Calu3 (cell line): ENCODE measurements at regions of chr1 and their contacts with region 1.

Region 1: GRCh38 chr1:71986160-71986559 is 296.2 kb downstream of the NEGR1 start:
- DNase-seq: no peak
- H3K4me3 Mint-ChIP-seq: no peak overlapping the region
- H3K27ac Mint-ChIP-seq: no peak overlapping the region
- H3K4me1 Mint-ChIP-seq: no peaks in the 10 kb centered on the region
- H3K27me3 Mint-ChIP-seq: no peaks in the 10 kb centered on the region
- CTCF ChIP-seq: no peak

Region 2: DNA sequence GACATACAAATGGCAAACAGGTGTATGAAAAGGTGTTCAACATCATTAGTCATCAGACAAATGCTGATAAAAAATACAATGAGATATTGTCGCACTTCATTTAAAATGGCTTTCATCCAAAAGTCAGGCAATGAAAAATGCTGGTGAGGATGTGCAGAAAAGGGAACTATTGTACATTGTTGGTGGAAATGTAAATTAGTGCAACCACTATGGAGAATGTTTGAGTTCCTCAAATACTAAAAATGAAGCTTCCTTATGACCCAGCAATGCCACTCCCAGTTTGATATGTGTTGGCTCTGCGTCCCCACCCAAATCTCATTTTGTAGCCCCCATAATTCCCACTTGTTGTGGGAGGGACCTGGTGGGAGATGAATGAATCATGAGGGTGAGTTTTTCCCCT is 595.6 kb before region 1 on chr1:
- CTCF ChIA-PET with region 1: no interaction called
- intact Hi-C with region 1: no loop called
- DNase-seq: no peak
- H3K4me3 Mint-ChIP-seq: no peak overlapping the region
- H3K27ac Mint-ChIP-seq: no peak overlapping the region
- H3K4me1 Mint-ChIP-seq: no peaks in the 10 kb centered on the region
- H3K27me3 Mint-ChIP-seq: no peaks in the 10 kb centered on the region
- CTCF ChIP-seq: no peak

Region 3: DNA sequence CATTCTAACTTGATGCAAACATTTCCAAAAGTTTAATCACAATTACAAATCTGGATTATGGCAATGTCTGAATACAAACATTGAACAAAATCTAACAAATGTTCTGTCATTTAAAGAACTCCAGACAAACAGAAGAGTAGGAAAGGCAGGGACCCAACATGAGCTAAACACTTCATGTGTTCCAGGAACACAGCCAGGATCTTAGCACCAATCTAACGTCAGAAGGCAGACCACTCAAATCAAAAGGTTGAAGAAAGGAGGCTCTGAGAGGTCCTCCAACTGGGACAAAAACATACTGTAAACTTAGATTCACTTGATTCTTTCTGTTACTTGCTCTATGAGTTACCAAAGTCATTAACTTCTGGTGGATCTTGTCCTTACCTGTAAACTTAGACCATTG is 77.9 kb before region 1 on chr1:
- CTCF ChIA-PET with region 1: no interaction called
- intact Hi-C with region 1: no loop called
- DNase-seq: no peak
- H3K4me3 Mint-ChIP-seq: no peak overlapping the region
- H3K27ac Mint-ChIP-seq: no peak overlapping the region
- H3K4me1 Mint-ChIP-seq: no peaks in the 10 kb centered on the region
- H3K27me3 Mint-ChIP-seq: no peaks in the 10 kb centered on the region
- CTCF ChIP-seq: no peak

Region 4: DNA sequence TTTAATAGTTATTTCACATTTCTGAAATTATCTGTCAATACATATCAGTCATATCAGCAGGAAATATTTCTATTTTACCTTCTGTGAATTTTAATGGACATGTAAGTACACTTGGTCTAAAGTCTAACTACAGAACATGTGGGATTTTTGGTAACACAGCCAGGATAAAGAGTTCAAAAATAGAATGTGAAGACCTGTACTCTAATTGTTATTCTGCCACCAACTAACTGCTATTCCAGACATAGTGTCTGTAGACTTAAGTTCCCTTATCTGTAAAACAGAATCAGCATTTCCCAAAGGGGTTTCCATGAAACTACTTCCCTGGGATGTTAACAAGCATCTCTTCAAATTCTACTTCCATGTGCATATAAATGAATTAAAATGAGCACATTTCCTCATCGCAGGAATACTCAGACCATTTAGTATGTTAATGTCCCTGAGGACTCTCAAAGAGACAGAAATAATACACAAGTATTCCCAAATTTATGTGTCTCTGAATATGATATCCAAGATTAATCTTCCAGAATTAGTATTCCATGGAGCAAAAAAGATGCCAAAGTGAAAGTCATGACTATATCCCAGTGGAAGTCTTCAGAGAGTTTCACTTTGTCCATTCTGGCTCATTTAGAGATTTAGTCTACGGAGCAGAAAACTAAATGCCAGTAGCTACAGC is 29.4 kb before region 1 on chr1:
- CTCF ChIA-PET with region 1: interaction called, 10 read pairs
- intact Hi-C with region 1: no loop called
- DNase-seq: no peak
- H3K4me3 Mint-ChIP-seq: no peak overlapping the region
- H3K27ac Mint-ChIP-seq: no peak overlapping the region
- H3K4me1 Mint-ChIP-seq: no peaks in the 10 kb centered on the region
- H3K27me3 Mint-ChIP-seq: no peaks in the 10 kb centered on the region
- CTCF ChIP-seq: no peak

Region 5: DNA sequence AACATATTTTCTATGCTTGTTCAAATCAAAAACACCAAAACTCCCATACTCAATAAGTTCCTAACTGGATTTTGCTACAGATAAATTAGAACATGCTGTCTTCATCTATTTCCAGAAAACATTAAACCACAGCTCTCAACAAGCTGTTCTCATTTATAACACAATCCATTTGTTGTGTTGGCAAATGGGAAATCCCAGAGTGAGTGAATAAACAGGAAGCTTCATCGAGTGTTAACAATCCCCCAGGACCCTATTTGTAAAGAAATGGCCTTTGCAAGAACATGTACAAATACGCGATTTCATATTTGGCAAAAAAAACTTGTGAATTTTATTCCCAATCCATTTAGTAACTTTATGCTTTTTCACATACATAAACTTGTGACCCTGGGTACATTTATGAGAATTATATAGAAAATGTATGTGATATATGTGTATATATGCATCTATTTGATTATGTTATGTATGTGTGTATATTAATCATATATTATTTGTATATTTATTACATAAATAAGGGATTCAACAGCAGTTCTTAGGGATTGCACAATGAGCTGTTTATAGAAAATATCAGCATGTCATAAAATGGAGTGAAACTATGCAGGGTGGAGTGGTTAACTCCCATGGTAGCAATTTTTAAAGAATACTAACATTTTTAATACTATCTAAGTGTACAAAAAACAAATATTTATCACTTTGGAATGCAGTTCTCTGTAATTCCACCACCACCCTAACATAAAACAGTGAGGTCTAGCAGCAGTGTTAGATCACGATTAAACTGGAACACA is 136.1 kb after region 1 on chr1:
- CTCF ChIA-PET with region 1: no interaction called
- intact Hi-C with region 1: no loop called
- DNase-seq: no peak
- H3K4me3 Mint-ChIP-seq: no peak overlapping the region
- H3K27ac Mint-ChIP-seq: no peak overlapping the region
- H3K4me1 Mint-ChIP-seq: no peaks in the 10 kb centered on the region
- H3K27me3 Mint-ChIP-seq: no peaks in the 10 kb centered on the region
- CTCF ChIP-seq: no peak